ENCODE measurements at regions of chr12 and their contacts with region 1.

Region 1: DNA sequence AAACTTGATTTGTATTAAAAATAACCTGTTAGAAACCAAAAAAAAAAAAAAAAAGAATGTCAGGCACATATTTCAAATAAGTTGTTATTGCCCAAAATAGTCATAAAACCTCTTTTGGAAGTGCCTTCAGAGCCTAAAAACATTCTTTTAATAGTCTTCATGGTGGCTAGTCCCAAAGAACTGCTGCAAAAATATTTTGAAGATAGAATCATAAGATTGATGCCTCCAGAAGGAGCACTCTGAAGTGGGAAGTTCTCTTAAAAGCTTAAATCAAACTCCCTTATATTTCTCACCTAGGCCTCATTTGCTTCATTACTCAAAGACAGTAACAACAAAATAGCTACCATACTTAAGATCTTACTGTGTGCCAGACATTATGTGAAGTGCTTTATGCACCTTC is 27.2 kb upstream of the NT5DC3 start:
- DNase-seq: no peak
- ATAC-seq: no peak
- H3K4me3 ChIP-seq: no peak overlapping the region
- H3K27ac ChIP-seq: no peak overlapping the region
- H3K4me1 ChIP-seq: no peaks in the 10 kb centered on the region
- H3K27me3 ChIP-seq: no peaks in the 10 kb centered on the region
- CTCF ChIP-seq: no peak

Region 2: GRCh38 chr12:103571286-103571685 is 296.9 kb before region 1 on chr12:
- CTCF ChIA-PET with region 1: no interaction called
- POLR2A ChIA-PET with region 1: no interaction called
- intact Hi-C with region 1: loop called (anchors 2 kb)
- DNase-seq: no peak
- ATAC-seq: no peak
- H3K4me3 ChIP-seq: no peak overlapping the region
- H3K27ac ChIP-seq: no peak overlapping the region
- H3K4me1 ChIP-seq: peaks cover 5% of the 10 kb centered on the region; the same call in 1 of the 2 replicates
- H3K27me3 ChIP-seq: no peaks in the 10 kb centered on the region
- CTCF ChIP-seq: no peak

Region 3: DNA sequence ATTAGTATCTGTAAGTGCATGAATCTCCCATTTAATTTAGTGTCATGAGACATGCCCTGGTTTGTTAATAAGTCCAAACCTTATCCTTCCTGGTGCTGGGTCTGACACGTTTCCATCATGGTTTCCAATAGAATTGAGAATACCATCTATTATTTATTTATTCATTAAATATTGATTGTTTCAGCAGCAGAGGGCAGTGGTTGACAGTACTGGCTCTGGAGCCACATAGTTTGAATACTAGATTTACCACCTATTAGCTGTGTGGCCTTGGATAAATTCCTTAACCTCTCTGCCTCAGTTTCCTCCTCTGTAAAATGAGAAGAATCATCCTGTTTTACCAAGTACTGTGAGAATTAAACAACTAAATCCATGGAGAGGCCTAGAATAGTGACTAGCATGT is 282.1 kb before region 1 on chr12:
- CTCF ChIA-PET with region 1: no interaction called
- POLR2A ChIA-PET with region 1: no interaction called
- intact Hi-C with region 1: loop called (anchors 1 kb)
- DNase-seq: peak; percentile 35
- ATAC-seq: peak; percentile 54
- H3K4me3 ChIP-seq: no peak overlapping the region
- H3K27ac ChIP-seq: no peak overlapping the region
- H3K4me1 ChIP-seq: no peaks in the 10 kb centered on the region
- H3K27me3 ChIP-seq: peaks cover 51% of the 10 kb centered on the region
- CTCF ChIP-seq: peak; percentile 44

Region 4: GRCh38 chr12:103771466-103771865 is 96.7 kb before region 1 on chr12:
- CTCF ChIA-PET with region 1: interaction called, 11 read pairs
- POLR2A ChIA-PET with region 1: no interaction called
- intact Hi-C with region 1: loop called (anchors 1 kb)
- DNase-seq: peak; percentile 72
- ATAC-seq: peak; percentile 91
- H3K4me3 ChIP-seq: no peak overlapping the region
- H3K27ac ChIP-seq: no peak overlapping the region
- H3K4me1 ChIP-seq: no peaks in the 10 kb centered on the region
- H3K27me3 ChIP-seq: no peaks in the 10 kb centered on the region
- CTCF ChIP-seq: peak; percentile 85

Region 5: GRCh38 chr12:103829092-103829491 is 39.1 kb before region 1 on chr12:
- CTCF ChIA-PET with region 1: no interaction called
- POLR2A ChIA-PET with region 1: no interaction called
- intact Hi-C with region 1: loop called (anchors 5 kb)
- DNase-seq: no peak
- ATAC-seq: peak; percentile 23; the same call in 1 of the 2 replicates
- H3K4me3 ChIP-seq: no peak overlapping the region
- H3K27ac ChIP-seq: no peak overlapping the region
- H3K4me1 ChIP-seq: peaks cover 23% of the 10 kb centered on the region
- H3K27me3 ChIP-seq: no peaks in the 10 kb centered on the region
- CTCF ChIP-seq: no peak

Region 6: GRCh38 chr12:103884316-103884715 is 16.1 kb after region 1 on chr12:
- CTCF ChIA-PET with region 1: no interaction called
- POLR2A ChIA-PET with region 1: no interaction called
- intact Hi-C with region 1: no loop called
- DNase-seq: peak; percentile 60
- ATAC-seq: no peak
- H3K4me3 ChIP-seq: no peak overlapping the region
- H3K27ac ChIP-seq: no peak overlapping the region
- H3K4me1 ChIP-seq: peaks cover 29% of the 10 kb centered on the region
- H3K27me3 ChIP-seq: no peaks in the 10 kb centered on the region
- CTCF ChIP-seq: peak; percentile 83

Region 7: DNA sequence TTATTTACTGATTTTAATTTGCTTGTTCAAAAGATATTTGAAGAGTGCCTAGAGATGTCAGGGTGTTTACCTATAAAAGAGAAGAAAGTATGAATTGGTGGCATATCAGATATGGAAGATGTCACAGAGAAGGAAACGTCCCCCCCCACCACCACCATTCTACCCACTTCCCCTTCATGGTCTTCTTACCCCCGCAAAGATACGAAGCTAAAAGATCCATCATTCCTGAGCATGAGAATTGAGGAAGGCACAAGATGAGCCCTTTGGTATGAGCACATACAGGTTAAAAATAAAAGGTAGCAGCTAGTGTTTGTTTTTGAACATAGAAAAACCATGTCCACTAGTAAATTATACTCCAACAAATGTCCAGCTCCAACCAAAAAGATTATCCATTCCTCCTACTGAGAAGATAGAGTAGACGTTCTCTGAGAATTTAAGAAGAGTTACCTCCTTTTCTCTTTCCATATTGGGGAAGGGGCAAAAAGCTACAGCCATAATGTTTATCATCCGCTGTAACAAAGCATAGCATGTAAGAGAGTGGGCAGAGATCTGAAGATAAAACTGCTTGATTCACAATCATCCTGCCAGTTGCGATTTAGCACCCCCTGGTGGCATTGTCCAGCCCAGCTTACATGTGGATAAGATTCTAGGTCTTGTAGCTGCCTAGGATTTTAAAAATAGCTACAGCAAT is 240.7 kb after region 1 on chr12:
- CTCF ChIA-PET with region 1: no interaction called
- POLR2A ChIA-PET with region 1: no interaction called
- intact Hi-C with region 1: no loop called
- DNase-seq: peak; percentile 94
- ATAC-seq: peak; percentile 99
- H3K4me3 ChIP-seq: no peak overlapping the region
- H3K27ac ChIP-seq: no peak overlapping the region
- H3K4me1 ChIP-seq: no peaks in the 10 kb centered on the region
- H3K27me3 ChIP-seq: no peaks in the 10 kb centered on the region
- CTCF ChIP-seq: peak; percentile 98